Cardiac septum (tissue), 1 donor: ENCODE measurements at regions of chr4 and their contacts with region 1.

Region 1: DNA sequence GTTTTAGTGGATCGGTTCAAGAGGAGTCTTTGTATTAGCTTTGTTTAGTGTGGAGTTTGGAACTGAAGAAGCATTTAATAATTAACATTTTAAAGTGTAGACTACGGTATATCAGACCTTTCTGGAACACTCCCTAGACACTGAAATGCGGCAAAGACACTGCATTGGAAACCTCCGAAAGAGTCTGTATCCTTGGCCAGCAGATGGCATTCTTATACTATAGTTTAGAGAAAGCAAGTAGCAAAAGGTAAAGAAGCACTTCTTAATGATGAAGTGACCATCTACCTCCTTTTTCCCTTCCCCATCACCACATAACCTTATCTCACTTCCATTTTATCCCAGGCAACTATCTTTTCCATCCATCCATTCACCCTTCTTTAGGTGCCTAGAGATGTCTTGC is 7.6 kb downstream of the FABP2 start:
- DNase-seq: no peak

Region 2: GRCh38 chr4:119490335-119490734 is 176.0 kb after region 1 on chr4:
- intact Hi-C with region 1: loop called (anchors 5 kb)
- DNase-seq: no peak

Region 3: GRCh38 chr4:120056246-120056645 is 741.9 kb after region 1 on chr4:
- intact Hi-C with region 1: loop called (anchors 5 kb)
- DNase-seq: no peak